Mammary epithelial cell (primary cell): ENCODE measurements at regions of chrX and their contacts with region 1.

Region 1: DNA sequence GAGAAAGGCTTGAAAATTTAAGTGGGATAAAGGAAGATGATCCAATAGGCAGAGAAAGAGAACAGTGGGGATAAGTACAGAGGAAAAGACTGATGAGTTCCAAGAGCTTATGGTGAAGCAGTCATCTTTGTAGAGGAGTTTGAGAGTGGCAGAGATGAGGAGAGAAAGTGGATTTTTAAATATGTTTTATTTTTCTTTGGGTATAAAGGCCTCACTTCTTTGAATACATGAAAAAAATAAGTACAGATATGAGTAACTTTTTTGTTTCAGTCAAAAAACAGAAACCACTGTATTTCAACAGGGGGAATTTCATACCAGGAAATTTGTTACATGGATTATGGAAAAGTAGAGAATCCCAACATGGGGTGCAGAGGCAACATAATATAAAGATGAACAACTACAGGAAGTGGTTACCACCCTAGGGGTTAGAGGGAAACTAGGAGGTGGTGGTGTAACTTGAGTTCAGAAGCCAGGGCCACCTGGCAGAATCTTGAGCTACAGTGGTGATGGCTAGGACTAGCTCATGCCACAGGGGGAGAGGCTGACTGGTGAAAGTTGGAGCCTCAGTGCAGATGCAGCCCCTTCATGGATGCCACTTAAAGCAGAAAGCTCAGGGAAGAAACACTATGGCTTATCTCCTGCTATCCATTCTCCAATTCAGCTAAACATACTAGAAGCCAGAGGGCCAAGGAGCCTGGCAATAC is 3.4 kb upstream of the CYBB start:
- DNase-seq: no peak
- H3K4me3 ChIP-seq: no peak overlapping the region
- H3K27ac ChIP-seq: no peak overlapping the region
- H3K4me1 ChIP-seq: no peaks in the 10 kb centered on the region
- H3K27me3 ChIP-seq: no peaks in the 10 kb centered on the region
- CTCF ChIP-seq: no peak

Region 2: GRCh38 chrX:37755025-37755424 is 21.4 kb before region 1 on chrX:
- CTCF ChIA-PET with region 1: no interaction called
- dilution Hi-C with region 1: no loop called
- in situ Hi-C with region 1: no loop called
- intact Hi-C with region 1: loop called (anchors 1 kb)
- DNase-seq: no peak
- H3K4me3 ChIP-seq: no peak overlapping the region
- H3K27ac ChIP-seq: no peak overlapping the region
- H3K4me1 ChIP-seq: no peaks in the 10 kb centered on the region
- H3K27me3 ChIP-seq: no peaks in the 10 kb centered on the region
- CTCF ChIP-seq: no peak